Mucosa of descending colon (tissue), 3 donors: ENCODE measurements at regions of chr6 and their contacts with region 1.

Region 1: GRCh38 chr6:7401075-7401474 is 11.5 kb downstream of the RIOK1 start:
- DNase-seq: no peak
- ATAC-seq: peak; percentile 19
- H3K4me3 ChIP-seq: no peak overlapping the region
- H3K4me1 ChIP-seq: no peaks in the 10 kb centered on the region
- CTCF ChIP-seq: no peak

Region 2: DNA sequence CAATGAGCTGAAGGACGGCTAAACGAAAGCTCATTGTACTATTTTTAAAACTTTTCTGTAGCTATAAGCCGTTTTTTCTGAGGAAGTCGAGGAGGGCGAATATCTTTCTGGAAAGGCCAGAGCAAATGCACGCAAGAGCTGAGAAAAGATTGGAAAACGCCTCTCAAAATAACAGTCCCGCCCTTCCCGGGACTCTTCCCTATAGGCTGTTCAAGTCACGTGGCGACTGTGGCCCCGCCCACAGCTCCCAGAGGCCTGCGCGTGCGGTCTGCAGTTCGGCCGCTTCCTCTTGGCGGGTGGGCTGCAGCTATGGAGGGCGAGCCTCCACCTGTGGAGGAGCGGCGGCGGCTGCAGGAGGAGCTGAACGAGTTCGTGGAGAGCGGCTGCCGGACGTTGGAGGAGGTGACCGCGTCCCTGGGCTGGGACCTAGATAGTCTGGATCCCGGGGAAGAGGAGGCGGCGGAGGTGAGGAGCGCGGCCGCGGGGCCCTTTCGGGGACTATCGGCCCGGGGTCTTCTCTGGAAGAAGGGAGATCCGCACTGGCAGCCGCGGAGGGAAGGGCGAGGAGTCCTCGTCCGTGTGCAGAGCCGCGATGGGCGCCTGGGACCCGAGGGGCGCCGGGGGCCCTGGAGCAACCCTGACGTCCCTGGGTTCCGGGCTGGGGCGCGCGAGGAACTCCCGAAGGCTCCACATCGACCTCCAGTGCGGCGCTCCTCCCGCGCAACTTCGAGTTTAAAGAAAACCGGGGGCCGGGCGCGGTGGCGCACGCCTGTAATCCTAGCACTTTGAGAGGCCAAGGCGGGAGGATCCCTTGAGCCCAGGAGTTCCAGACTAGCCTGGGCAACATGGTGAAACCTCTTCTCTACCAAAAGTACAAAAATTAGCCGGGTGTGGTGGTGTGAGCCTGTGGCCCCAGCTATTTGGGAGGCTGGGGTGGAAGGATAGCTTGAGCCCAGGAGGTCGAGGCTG is 189.2 kb after region 1 on chr6 and contains the start of gene SNRNP48:
- intact Hi-C with region 1: loop called in 1 of 2 experiments (anchors 10 kb)
- DNase-seq: peak; percentile 95 to 99 (median 97)
- ATAC-seq: peak; percentile 95
- H3K4me3 ChIP-seq: peak within 1 kb of the TSS; percentile 86
- H3K4me1 ChIP-seq: peaks cover 18% of the 10 kb centered on the region
- CTCF ChIP-seq: no peak
- total RNA-seq, gene SNRNP48: 10.6 to 14.2 (median 11.0) TPM